ENCODE measurements at regions of chr11 and their contacts with region 1.

Region 1: GRCh38 chr11:72724851-72725730 is 27.1 kb downstream of the ARAP1 start:
- DNase-seq: peak; percentile 80
- ATAC-seq: peak; percentile 82
- H3K4me3 ChIP-seq: no peak overlapping the region
- H3K27ac ChIP-seq: no peak overlapping the region
- H3K4me1 ChIP-seq: no peaks in the 10 kb centered on the region
- H3K27me3 ChIP-seq: no peaks in the 10 kb centered on the region
- CTCF ChIP-seq: peak; percentile 91
- EP300 ChIP-seq: no peak
- POLR2A ChIP-seq: no peak
- RAD21 ChIP-seq: peak; percentile 92

Region 2: GRCh38 chr11:72766152-72766902 is 41.2 kb after region 1 on chr11:
- CTCF ChIA-PET with region 1: no interaction called
- POLR2A ChIA-PET with region 1: no interaction called
- in situ Hi-C with region 1: no loop called
- intact Hi-C with region 1: loop called (anchors 1 kb)
- DNase-seq: peak; percentile 85
- ATAC-seq: peak; percentile 95
- H3K4me3 ChIP-seq: peak overlapping the region; percentile 29 to 63 (median 31); a peak in 5 of 6 replicates
- H3K27ac ChIP-seq: peak overlapping the region; percentile 88
- H3K4me1 ChIP-seq: peaks cover 56% of the 10 kb centered on the region
- H3K27me3 ChIP-seq: no peaks in the 10 kb centered on the region
- CTCF ChIP-seq: peak; percentile 70
- EP300 ChIP-seq: peak in 1 of 2 experiments; percentile 54; a peak in 1 of 4 replicates
- POLR2A ChIP-seq: no peak; a peak in 1 of 4 replicates
- RAD21 ChIP-seq: peak; percentile 80

Region 3: DNA sequence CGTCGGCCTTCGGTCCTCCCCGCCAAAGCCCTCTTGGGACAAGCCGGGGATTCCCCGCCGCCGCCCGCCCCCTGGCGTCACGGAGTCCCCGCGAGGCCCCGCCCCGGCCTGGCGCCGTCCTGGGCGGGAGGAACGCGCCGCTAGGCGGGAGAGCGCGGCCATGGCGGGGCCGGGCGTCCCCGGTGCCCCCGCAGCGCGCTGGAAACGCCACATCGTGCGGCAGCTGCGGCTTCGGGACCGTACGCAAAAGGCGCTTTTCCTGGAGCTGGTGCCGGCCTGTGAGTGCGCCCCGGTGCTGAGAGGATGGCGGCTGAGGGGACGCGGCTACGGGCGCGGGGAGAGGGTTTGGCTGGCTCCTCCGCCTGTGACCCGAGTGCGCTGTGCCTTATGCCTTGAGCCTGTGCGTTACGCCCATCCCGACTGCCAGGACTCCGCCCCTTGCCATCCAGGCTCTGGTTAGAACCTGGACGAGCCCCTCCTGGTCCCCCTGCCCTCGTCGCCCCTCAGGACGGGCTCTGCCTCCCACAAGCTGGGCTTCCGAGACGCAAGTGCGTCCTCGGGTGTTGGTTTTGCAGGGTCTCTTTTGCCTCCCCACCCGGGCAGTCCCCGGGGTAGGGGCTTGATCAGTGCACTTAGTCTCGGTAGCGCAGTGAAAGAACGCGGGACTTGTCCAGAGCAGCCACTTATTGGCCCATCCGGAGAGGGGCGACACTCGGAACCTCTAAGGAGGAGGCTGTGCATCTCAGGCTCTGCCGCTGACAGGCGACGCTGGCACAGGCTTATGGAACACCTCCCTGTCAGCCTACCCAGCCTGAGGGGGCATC is 89.4 kb after region 1 on chr11 and contains the start of gene ATG16L2:
- CTCF ChIA-PET with region 1: interaction called, 25 read pairs
- POLR2A ChIA-PET with region 1: interaction called, 8 read pairs
- in situ Hi-C with region 1: no loop called
- intact Hi-C with region 1: loop called (anchors 1 kb)
- DNase-seq: peak; percentile 64
- ATAC-seq: peak; percentile 83
- H3K4me3 ChIP-seq: peak within 1 kb of the TSS; percentile 73 to 90 (median 82)
- H3K27ac ChIP-seq: peak within 1 kb of the TSS; percentile 94
- H3K4me1 ChIP-seq: peaks cover 37% of the 10 kb centered on the region
- H3K27me3 ChIP-seq: no peaks in the 10 kb centered on the region; a peak in 1 of 5 replicates
- CTCF ChIP-seq: peak; percentile 34
- EP300 ChIP-seq: 0 out of 4 replicates have a peak, but pooled peaks of 1 of the 2 experiments have one; percentile 9
- POLR2A ChIP-seq: peak; percentile 70 to 78
- RAD21 ChIP-seq: 0 out of 2 replicates have a peak, but pooled peaks have one; percentile 57
- total RNA-seq, gene ATG16L2: 0.79 and 6.2 TPM in 2 replicates

Region 4: GRCh38 chr11:72848846-72849466 is 123.9 kb after region 1 on chr11:
- CTCF ChIA-PET with region 1: interaction called, 11 read pairs
- POLR2A ChIA-PET with region 1: no interaction called
- in situ Hi-C with region 1: no loop called
- intact Hi-C with region 1: no loop called
- DNase-seq: peak; percentile 29
- ATAC-seq: peak; percentile 78
- H3K4me3 ChIP-seq: no peak overlapping the region
- H3K27ac ChIP-seq: no peak overlapping the region
- H3K4me1 ChIP-seq: no peaks in the 10 kb centered on the region
- H3K27me3 ChIP-seq: no peaks in the 10 kb centered on the region
- CTCF ChIP-seq: peak; percentile 70
- EP300 ChIP-seq: no peak
- POLR2A ChIP-seq: no peak
- RAD21 ChIP-seq: no peak

Region 5: GRCh38 chr11:73126804-73127480 is 401.9 kb after region 1 on chr11:
- CTCF ChIA-PET with region 1: no interaction called
- POLR2A ChIA-PET with region 1: no interaction called
- in situ Hi-C with region 1: no loop called
- intact Hi-C with region 1: no loop called
- DNase-seq: no peak
- ATAC-seq: no peak
- H3K4me3 ChIP-seq: no peak overlapping the region
- H3K27ac ChIP-seq: no peak overlapping the region
- H3K4me1 ChIP-seq: peaks cover 21% of the 10 kb centered on the region; the same call in 1 of the 2 replicates
- H3K27me3 ChIP-seq: no peaks in the 10 kb centered on the region
- CTCF ChIP-seq: no peak
- EP300 ChIP-seq: no peak
- POLR2A ChIP-seq: no peak
- RAD21 ChIP-seq: no peak